ENCODE measurements at regions of chr12 and their contacts with region 1.

Region 1: DNA sequence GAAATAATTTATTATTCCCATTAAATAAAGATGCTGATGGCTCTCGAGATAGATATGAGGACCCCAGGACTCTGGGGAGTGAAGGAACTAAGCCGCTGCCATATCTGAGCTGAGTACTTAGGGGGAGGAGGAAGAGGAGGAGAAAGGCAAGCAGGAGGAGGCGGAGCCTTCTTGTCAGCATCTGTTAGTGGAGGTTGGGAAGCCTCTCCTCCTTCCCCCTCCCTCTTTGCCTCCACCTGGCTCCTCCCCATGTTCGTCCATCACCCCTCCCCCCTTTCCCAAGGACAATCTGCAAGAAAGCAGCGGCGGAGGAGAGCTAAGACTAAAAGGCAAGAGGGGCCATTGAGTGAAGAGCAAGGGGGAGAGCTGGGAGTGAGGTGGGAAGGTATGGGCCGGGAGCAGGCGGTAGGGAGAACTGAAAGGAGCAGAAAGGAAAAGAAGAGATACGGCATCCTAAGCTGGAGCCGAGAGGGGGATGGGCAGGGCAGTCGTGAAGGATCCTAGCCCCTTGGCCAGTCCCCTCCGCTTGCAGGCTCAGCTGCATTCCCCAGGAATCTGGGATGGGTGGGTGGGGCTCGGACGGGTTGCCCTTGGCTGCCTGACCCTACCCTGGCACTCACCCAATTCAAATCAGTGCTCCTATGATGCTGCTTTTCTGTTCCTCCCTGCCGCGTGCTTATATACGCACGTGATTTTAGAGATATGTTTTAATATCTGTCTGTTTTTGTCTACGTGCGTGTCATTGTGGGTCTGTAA is at the start of gene PFKM:
- DNase-seq: peak; percentile 91
- ATAC-seq: peak; percentile 100
- H3K4me3 ChIP-seq: peak within 1 kb of the TSS; percentile 93
- H3K27ac ChIP-seq: peak within 1 kb of the TSS; percentile 80
- H3K4me1 ChIP-seq: no peaks in the 10 kb centered on the region
- H3K27me3 ChIP-seq: peaks cover 8% of the 10 kb centered on the region
- CTCF ChIP-seq: no peak
- POLR2A ChIP-seq: no peak
- RAD21 ChIP-seq: no peak
- total RNA-seq, gene PFKM: 77.5 and 82.6 TPM in 2 replicates

Region 2: DNA sequence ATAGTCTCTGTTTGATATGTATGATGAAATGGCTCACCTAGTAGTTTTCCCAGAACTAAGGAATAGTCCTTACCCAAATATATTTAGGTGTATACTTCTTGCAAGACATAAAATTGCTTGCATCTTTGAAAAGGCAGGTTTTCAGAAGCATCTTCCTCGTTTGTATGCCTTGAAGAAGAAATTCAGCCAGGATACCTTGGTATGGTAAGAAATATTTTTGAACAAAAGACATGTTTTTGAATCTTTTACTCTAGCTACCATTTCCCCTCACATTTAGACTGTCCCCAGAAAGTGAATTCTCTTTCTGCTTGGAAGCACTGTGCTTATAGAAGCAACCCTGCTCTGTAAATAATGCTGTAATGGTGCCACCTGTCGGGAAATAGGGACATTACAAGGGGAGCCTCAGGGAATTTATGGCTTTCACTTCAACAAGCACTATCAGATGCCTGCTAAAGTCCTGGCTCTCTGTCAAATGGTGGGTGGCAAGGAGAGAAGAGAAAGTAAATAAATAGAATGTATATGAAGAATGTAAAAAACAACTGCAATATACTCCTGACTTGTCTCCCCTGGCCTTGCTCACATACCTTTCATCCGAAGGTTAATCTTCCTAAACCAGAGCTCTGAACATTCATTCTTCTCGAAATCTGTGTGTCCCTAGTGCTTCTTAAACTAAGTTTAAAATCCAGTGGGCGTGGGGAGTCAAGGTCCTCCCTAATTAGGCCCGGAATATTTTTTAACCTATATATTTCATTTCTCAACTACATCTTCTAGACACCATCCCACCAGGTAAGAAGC is 70.3 kb after region 1 on chr12:
- CTCF ChIA-PET with region 1: no interaction called
- POLR2A ChIA-PET with region 1: no interaction called
- dilution Hi-C with region 1: no loop called
- in situ Hi-C with region 1: no loop called
- intact Hi-C with region 1: loop called (anchors 2 kb)
- DNase-seq: peak; percentile 67
- ATAC-seq: peak; percentile 97
- H3K4me3 ChIP-seq: no peak overlapping the region
- H3K27ac ChIP-seq: no peak overlapping the region
- H3K4me1 ChIP-seq: peaks cover under 1% of the 10 kb centered on the region; the same call in 1 of the 2 replicates
- H3K27me3 ChIP-seq: peaks cover 45% of the 10 kb centered on the region
- CTCF ChIP-seq: peak; percentile 75
- POLR2A ChIP-seq: no peak
- RAD21 ChIP-seq: peak; percentile 68

Measured in IMR-90 (cell line).